Activated naive CD4-positive, alpha-beta T cell treated with anti-CD3 and anti-CD28 coated beads for 36 hours (primary cell): ENCODE measurements at regions of chr9 and their contacts with region 1.

Region 1: GRCh38 chr9:125820100-125820804 is 73.1 kb downstream of the PBX3 start:
- DNase-seq: no peak
- H3K4me3 Mint-ChIP-seq: no peak overlapping the region
- H3K27ac Mint-ChIP-seq: no peak overlapping the region
- H3K4me1 Mint-ChIP-seq: peaks cover 20% of the 10 kb centered on the region
- H3K27me3 Mint-ChIP-seq: no peaks in the 10 kb centered on the region

Region 2: GRCh38 chr9:125889476-125890419 is 69.5 kb after region 1 on chr9:
- CTCF ChIA-PET with region 1: no interaction called
- intact Hi-C with region 1: loop called (anchors 5 kb)
- DNase-seq: peak; percentile 48
- H3K4me3 Mint-ChIP-seq: peak overlapping the region; percentile 69
- H3K27ac Mint-ChIP-seq: no peak overlapping the region
- H3K4me1 Mint-ChIP-seq: peaks cover 9% of the 10 kb centered on the region
- H3K27me3 Mint-ChIP-seq: peaks cover 19% of the 10 kb centered on the region